ENCODE measurements at regions of chr10 and their contacts with region 1.

Region 1: DNA sequence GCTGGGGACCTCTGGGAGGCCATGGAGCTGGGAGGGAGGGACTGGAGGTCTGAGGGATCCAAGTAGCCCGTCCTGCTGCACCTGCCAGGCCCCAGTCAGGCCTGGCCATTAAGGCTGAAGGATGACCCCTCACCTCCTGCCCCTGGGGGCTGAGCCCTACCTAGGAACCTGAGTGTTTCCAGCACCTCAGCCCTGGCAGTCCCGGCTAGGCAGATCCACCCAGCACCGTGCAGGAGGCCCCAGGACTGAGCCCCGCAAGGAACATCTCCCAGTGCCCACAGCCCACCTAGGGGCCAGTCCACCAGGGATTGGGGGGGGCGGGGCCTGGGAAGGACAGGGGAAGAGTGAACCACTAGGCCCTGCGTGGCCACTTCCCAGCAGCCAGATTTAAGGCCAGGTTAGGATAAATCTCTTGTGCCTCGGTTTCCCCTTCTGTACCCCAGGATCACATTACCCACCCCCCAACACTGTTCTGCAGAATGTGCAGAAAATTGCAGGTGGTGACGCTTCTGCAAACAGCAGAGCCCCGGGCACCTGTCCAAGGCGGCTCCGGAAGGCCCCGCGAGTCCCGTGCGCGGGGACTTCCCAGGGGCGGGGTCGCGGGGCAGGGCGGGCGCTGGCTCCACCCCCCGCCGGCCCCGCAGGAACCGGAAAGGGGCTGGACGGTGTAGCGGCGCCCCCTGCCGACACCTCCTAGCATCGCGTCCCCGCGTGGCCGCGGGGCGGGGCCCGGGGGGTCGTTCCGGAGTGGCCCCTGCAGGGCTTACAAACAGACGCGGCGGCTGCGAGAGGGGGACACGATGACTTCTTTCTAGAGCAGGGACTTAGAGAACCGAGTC is 55.9 kb downstream of the PWWP2B start:
- DNase-seq: peak; percentile 95
- ATAC-seq: peak; percentile 90
- H3K4me3 Mint-ChIP-seq: peak overlapping the region; percentile 38
- H3K27ac Mint-ChIP-seq: peak overlapping the region; percentile 77
- H3K4me1 Mint-ChIP-seq: peaks cover 24% of the 10 kb centered on the region
- H3K27me3 Mint-ChIP-seq: no peaks in the 10 kb centered on the region
- CTCF ChIP-seq: peak; percentile 66

Region 2: DNA sequence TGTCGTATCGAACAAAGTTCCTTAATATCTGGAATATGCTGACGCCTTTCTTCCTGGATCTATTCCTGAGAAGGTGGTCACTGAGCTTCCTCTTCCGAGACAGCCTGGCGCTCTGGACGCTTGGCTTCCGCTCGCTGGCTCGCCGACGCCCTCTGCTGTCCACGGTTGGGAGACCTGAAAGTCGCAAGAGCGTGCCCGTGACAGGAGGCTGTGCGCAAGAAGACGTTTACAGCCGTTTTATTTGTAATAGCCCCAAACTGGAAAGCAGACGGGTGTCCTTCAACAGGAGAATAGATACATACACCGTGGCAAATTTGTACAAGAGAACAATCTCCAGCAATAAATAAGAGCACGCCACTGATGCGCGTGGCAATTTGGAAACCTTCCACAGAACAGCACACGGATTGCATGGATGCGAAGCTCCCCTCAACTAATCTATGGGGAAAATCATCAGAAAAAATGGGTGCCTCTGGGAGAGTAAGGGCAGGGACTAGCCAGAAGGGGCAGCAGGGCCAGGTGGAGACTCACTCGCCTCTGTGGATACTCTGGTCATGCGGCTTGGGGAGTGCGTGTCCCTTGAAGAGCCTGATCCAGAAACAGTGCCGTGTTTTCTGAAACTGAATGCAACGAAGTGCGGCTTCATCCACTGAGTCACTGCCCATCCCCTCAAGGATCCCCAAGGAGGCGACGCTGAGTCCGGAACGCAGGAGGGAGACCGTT is 429.6 kb before region 1 on chr10:
- CTCF ChIA-PET with region 1: no interaction called
- POLR2A ChIA-PET with region 1: no interaction called
- intact Hi-C with region 1: loop called (anchors 5 kb)
- DNase-seq: peak; percentile 57
- ATAC-seq: peak; percentile 72
- H3K4me3 Mint-ChIP-seq: no peak overlapping the region
- H3K27ac Mint-ChIP-seq: no peak overlapping the region
- H3K4me1 Mint-ChIP-seq: peaks cover 4% of the 10 kb centered on the region
- H3K27me3 Mint-ChIP-seq: peaks cover 18% of the 10 kb centered on the region
- CTCF ChIP-seq: peak; percentile 48

Region 3: DNA sequence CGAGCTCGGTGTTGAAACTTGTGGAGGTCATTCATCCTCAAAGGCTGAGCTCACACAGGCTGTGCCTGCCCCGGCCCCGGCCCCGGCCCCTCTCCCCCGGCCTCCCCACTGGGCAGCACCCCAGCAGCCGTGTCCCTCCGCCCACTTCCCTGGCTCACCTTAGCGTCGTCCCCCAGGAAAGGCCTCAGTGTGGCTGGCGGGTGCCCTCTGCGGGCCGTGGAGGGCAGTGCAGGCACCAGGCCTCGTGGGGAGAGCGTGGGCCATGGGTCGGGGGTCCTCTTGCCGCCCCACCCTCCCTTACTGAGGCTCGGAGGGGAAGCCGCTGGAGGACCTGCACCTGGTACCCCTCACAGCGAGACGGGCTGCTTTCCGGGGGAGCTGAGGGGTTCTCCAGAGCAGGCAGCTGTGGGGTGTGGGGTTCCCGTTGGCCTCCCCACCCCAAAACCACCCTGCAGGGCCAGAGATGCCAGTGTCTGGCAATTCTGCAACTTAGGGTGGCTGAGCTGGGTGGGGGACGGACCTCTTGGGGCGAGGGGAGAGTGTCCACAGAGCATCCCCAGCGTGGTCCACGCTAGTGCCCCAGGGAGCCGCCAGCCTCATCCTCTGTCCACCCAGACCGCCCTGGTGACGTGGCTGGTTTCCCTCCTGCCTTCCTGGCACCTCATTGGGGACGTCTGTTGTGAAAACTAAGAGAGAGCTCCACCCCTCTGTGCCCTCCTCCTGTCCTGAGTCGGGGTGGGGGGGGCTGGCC is 310.3 kb before region 1 on chr10:
- CTCF ChIA-PET with region 1: no interaction called
- POLR2A ChIA-PET with region 1: no interaction called
- intact Hi-C with region 1: loop called (anchors 2 kb)
- DNase-seq: peak; percentile 51
- ATAC-seq: peak; percentile 74
- H3K4me3 Mint-ChIP-seq: no peak overlapping the region
- H3K27ac Mint-ChIP-seq: no peak overlapping the region
- H3K4me1 Mint-ChIP-seq: no peaks in the 10 kb centered on the region
- H3K27me3 Mint-ChIP-seq: no peaks in the 10 kb centered on the region
- CTCF ChIP-seq: peak; percentile 69

Region 4: DNA sequence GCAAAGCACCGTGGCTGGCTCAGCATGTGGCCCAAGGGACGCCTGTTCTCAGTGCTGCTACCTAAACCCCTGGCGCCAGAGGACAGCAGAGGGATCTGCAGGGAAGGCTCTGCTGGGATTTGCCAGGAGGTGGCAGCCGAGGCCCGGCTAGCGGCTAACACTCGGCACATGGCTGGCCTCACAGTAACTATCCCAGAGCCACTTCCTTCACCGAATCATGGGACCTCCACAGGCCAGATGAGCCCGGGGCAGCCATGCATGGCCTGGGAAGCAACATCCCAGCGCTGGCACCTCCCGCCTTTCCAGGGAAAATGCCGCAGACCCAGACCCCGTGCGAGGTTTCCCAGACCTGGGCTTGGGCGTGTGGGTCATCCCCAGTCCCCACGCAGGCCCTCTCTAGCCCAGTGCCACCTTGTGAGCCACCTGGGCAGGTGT is 229.7 kb before region 1 on chr10:
- CTCF ChIA-PET with region 1: interaction called, 3 read pairs
- POLR2A ChIA-PET with region 1: no interaction called
- intact Hi-C with region 1: loop called (anchors 1 kb)
- DNase-seq: peak; percentile 43
- ATAC-seq: peak; percentile 97
- H3K4me3 Mint-ChIP-seq: no peak overlapping the region
- H3K27ac Mint-ChIP-seq: no peak overlapping the region
- H3K4me1 Mint-ChIP-seq: peaks cover 2% of the 10 kb centered on the region
- H3K27me3 Mint-ChIP-seq: no peaks in the 10 kb centered on the region
- CTCF ChIP-seq: no peak

Region 5: DNA sequence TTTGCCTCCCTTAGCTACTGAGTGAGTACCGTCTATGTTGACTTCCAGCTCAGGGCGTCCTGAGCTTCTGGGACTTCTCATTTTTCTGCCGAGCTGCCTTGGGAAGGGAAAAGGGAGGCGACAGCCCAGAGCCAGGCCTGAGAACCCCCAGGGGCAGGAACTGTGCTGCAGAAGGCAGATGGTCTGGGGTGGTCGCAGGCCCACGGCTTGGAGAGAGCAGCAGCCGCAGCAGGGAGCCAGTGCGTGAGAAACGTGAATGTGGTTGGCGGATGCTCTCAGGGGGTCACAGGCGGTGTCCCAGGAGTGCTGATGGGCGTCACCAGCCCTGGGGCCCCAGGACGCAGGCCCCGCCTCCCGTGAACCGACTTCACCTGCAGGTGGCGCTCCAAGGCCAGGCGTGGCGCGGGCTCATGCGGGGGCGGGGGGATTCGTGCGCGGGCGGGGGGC is 65.1 kb before region 1 on chr10:
- CTCF ChIA-PET with region 1: interaction called, 6 read pairs
- POLR2A ChIA-PET with region 1: interaction called, 3 read pairs
- intact Hi-C with region 1: loop called (anchors 1 kb)
- DNase-seq: peak; percentile 83
- ATAC-seq: peak; percentile 98
- H3K4me3 Mint-ChIP-seq: peak overlapping the region; percentile 80
- H3K27ac Mint-ChIP-seq: peak overlapping the region; percentile 85
- H3K4me1 Mint-ChIP-seq: peaks cover 7% of the 10 kb centered on the region
- H3K27me3 Mint-ChIP-seq: no peaks in the 10 kb centered on the region
- CTCF ChIP-seq: no peak

Region 6: GRCh38 chr10:132396495-132397035 is 56.3 kb before region 1 on chr10:
- CTCF ChIA-PET with region 1: no interaction called
- POLR2A ChIA-PET with region 1: interaction called, 18 read pairs
- intact Hi-C with region 1: loop called (anchors 1 kb)
- DNase-seq: peak; percentile 74
- ATAC-seq: peak; percentile 71
- H3K4me3 Mint-ChIP-seq: no peak overlapping the region
- H3K27ac Mint-ChIP-seq: no peak overlapping the region
- H3K4me1 Mint-ChIP-seq: peaks cover 59% of the 10 kb centered on the region
- H3K27me3 Mint-ChIP-seq: no peaks in the 10 kb centered on the region
- CTCF ChIP-seq: no peak

Region 7: GRCh38 chr10:133278577-133279265 is 825.9 kb after region 1 on chr10:
- CTCF ChIA-PET with region 1: no interaction called
- POLR2A ChIA-PET with region 1: no interaction called
- intact Hi-C with region 1: no loop called
- DNase-seq: peak; percentile 44
- ATAC-seq: peak; percentile 10
- H3K4me3 Mint-ChIP-seq: peak overlapping the region; percentile 76
- H3K27ac Mint-ChIP-seq: peak overlapping the region; percentile 80
- H3K4me1 Mint-ChIP-seq: peaks cover 38% of the 10 kb centered on the region
- H3K27me3 Mint-ChIP-seq: no peaks in the 10 kb centered on the region
- CTCF ChIP-seq: no peak